Activated CD8-positive, alpha-beta T cell treated with anti-CD3 and anti-CD28 coated beads for 36 hours (primary cell): ENCODE measurements at regions of chr5 and their contacts with region 1.

Region 1: DNA sequence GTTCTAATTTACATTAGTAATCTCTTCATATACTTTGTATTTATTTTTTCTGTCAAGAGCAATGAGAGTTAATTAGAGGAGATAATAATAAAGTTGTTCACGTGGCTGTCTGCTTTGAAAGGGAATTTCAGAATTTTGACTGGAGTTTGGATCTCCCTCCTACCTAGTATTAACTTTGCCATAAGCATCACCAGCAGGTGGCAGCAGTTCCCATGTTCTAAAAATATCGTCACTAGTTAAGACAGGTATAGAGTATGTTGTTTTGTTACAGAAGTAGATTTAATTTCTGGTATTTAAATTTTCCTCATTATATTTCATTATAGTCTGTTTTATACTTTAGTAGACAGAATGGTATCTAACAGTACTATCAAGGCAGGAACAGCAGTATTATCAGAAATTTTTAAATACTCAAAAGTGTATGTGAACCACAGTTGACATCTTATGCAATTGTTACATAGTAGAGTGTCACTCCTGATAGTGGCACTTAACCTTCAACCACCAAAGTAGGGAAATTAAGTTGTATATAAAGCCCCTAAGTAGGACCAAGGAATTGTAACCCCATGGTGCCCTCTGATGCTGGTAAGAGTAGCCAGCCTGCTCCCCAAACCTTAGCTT is 20.4 kb downstream of the GNPDA1 start:
- DNase-seq: peak; percentile 93
- ATAC-seq: peak; percentile 90
- H3K4me3 Mint-ChIP-seq: no peak overlapping the region
- H3K27ac Mint-ChIP-seq: no peak overlapping the region
- H3K4me1 Mint-ChIP-seq: peaks cover 15% of the 10 kb centered on the region
- H3K27me3 Mint-ChIP-seq: no peaks in the 10 kb centered on the region
- CTCF ChIP-seq: peak; percentile 89

Region 2: GRCh38 chr5:141920771-141921170 is 71.7 kb before region 1 on chr5:
- CTCF ChIA-PET with region 1: no interaction called
- POLR2A ChIA-PET with region 1: no interaction called
- intact Hi-C with region 1: no loop called
- DNase-seq: no peak
- ATAC-seq: no peak
- H3K4me3 Mint-ChIP-seq: no peak overlapping the region
- H3K27ac Mint-ChIP-seq: no peak overlapping the region
- H3K4me1 Mint-ChIP-seq: peaks cover 16% of the 10 kb centered on the region
- H3K27me3 Mint-ChIP-seq: peaks cover 2% of the 10 kb centered on the region
- CTCF ChIP-seq: no peak

Region 3: GRCh38 chr5:141976176-141976575 is 16.3 kb before region 1 on chr5:
- CTCF ChIA-PET with region 1: interaction called, 63 read pairs
- POLR2A ChIA-PET with region 1: interaction called, 3 read pairs
- intact Hi-C with region 1: no loop called
- DNase-seq: no peak
- ATAC-seq: no peak
- H3K4me3 Mint-ChIP-seq: no peak overlapping the region
- H3K27ac Mint-ChIP-seq: no peak overlapping the region
- H3K4me1 Mint-ChIP-seq: peaks cover 29% of the 10 kb centered on the region
- H3K27me3 Mint-ChIP-seq: no peaks in the 10 kb centered on the region
- CTCF ChIP-seq: no peak

Region 4: GRCh38 chr5:142006363-142007236 is 14.1 kb after region 1 on chr5:
- CTCF ChIA-PET with region 1: interaction called, 27 read pairs
- POLR2A ChIA-PET with region 1: interaction called, 4 read pairs
- intact Hi-C with region 1: no loop called
- DNase-seq: peak; percentile 85
- ATAC-seq: peak; percentile 86
- H3K4me3 Mint-ChIP-seq: peak overlapping the region; percentile 48
- H3K27ac Mint-ChIP-seq: peak overlapping the region; percentile 95
- H3K4me1 Mint-ChIP-seq: peaks cover 76% of the 10 kb centered on the region
- H3K27me3 Mint-ChIP-seq: no peaks in the 10 kb centered on the region
- CTCF ChIP-seq: no peak